ENCODE measurements at regions of chr9 and their contacts with region 1.

Region 1: GRCh38 chr9:27529316-27530278 is at the start of gene MOB3B:
- DNase-seq: peak; percentile 82
- CTCF ChIP-seq: peak; percentile 85

Region 2: DNA sequence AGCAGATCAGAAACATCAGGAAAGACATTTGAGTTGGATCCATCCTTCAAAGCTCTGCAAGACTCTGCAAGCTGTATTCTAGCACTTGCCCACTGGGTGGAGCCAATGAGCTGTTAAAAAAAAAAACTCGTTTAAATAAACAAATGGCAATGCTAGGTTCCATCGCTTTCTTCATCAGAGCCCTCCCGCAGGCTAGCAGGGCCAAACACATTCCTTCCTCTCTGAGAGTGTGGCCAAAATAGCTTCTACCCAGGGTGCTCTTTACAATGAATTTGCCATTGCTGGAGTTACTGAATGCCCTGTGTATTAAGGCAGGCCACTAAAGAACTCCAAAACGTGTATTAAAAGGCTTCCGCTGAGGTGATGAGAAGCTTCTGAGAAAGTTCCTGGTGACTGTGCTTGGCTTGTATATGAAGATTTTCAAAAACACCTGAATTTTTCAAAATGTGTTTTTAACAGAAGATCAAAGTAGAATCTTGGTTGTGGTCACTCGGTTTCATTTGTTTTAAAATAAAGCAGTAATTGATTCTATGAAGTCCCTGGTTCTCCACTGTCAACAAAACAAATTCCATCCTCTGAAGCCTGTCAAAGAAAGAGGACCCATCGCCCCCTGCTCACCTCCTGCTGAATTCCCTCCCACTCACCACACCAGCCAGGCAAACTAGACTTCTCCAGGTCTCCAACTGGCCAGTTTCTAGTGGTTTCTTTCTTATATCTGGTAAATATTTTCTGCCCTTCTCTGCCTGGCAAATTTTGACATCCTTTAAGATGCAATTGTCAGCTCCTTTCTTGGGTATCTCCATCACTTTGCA is 196.2 kb before region 1 on chr9:
- CTCF ChIA-PET with region 1: interaction called, 82 read pairs
- POLR2A ChIA-PET with region 1: no interaction called
- DNase-seq: peak; percentile 73
- CTCF ChIP-seq: peak; percentile 69

Region 3: GRCh38 chr9:27514551-27514950 is 15.0 kb before region 1 on chr9:
- CTCF ChIA-PET with region 1: interaction called, 26 read pairs
- POLR2A ChIA-PET with region 1: no interaction called
- DNase-seq: no peak
- CTCF ChIP-seq: no peak

Region 4: DNA sequence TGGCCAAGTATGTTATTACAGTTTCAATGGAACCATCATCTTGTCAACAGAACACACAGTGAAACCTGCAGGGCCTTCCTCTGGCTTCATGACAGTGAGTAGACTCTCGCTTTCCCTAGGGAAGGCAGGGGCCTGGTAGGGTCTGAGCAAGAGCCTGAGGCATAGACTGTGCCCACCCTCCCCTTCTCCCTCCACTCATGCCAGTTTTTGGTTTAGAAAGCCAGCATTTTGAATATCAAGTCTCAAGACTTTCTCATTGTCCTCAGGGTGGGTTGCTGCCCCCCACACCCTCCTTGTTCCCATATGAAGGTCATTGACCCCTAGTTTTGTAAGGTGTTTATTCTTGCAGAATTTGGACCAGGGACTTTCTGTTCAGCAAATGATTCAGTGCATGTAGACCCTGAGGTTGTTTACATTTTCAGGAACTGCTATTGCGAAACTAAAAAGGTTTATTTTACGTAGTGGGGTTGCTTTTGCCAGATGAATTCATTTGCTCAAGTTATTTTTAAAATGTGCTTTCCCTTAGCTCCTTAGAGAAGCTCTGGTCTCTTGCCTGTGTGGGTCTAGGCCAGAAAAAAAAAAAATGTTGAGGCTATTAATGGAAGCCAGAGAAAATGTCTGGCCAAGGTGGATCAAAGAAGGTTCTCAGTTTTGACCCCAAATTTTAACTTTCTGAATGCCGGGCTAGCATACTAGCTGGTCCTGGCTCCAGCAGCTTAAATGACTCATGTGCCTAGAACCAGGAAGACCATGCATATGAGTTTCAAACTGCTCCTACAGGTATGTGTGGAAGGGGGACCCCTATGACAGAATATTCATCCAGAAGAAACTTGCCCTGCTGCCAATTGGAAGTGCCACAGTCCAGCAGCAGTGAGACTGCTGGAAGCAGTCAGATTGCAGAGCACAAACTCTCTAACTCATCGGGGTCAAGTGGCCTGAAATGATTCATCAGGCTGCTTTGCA is 10.2 kb after region 1 on chr9:
- CTCF ChIA-PET with region 1: interaction called, 16 read pairs
- POLR2A ChIA-PET with region 1: interaction called, 4 read pairs
- DNase-seq: no peak
- CTCF ChIP-seq: no peak

Region 5: GRCh38 chr9:27548055-27548741 is 18.6 kb after region 1 on chr9:
- CTCF ChIA-PET with region 1: interaction called, 16 read pairs
- POLR2A ChIA-PET with region 1: no interaction called
- DNase-seq: no peak
- CTCF ChIP-seq: peak; percentile 31

Measured in GM10248 (cell line).